Lower leg skin (tissue), 4 donors: ENCODE measurements at regions of chr2 and their contacts with region 1.

Region 1: GRCh38 chr2:7014174-7014640 is 97.0 kb downstream of the RNF144A start:
- DNase-seq: no peak
- H3K4me3 ChIP-seq: no peak overlapping the region
- CTCF ChIP-seq: no peak
- POLR2A ChIP-seq: no peak

Region 2: GRCh38 chr2:5915881-5916310 is 1098.3 kb before region 1 on chr2:
- intact Hi-C with region 1: no loop called
- DNase-seq: no peak
- H3K4me3 ChIP-seq: no peak overlapping the region
- CTCF ChIP-seq: no peak
- POLR2A ChIP-seq: no peak

Region 3: DNA sequence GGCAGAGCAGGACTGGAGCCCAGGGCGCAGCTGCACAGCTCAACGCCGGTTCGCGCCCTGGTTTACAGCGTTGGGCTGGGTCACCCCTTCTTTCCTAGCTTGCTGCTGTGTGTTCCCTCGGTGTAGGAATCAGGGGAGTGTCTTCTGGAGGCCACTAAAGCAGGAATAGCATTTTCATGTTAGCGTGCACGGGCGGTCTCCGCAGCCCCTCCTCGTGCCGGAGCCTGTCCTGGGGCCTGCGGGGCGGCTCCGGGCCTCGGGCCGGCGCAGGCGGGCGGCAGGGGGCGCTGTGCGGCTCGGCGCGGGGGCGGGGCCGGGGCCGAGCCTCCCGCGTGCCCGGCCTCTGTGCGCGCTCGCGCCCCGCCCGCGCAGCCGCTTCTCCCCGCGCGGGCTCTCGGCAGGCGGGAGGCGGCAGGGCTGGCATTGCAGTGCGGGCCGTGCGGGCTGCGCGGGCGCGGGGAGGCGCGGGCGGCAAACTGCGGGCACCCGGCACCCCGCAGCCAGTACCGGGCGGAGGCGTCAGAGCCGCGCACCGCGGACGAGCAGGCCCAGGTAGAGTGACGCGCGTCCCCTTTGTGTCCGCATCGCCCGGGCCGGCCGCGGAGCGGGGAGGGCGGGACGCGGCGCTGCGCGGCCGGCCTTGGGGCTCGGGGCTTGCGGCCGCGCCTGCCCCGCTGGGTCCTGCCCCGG is 97.0 kb before region 1 on chr2 and contains the start of gene RNF144A:
- intact Hi-C with region 1: loop called (anchors 10 kb)
- DNase-seq: no peak
- H3K4me3 ChIP-seq: peak within 1 kb of the TSS; percentile 61
- CTCF ChIP-seq: no peak
- POLR2A ChIP-seq: no peak
- total RNA-seq, gene RNF144A: 5.2 to 10.9 (median 7.6) TPM